ENCODE measurements at regions of chr3 and their contacts with region 1.

Region 1: GRCh38 chr3:44729384-44729910 is at the start of gene ZNF501:
- DNase-seq: peak; percentile 67
- H3K4me3 ChIP-seq: peak within 1 kb of the TSS; percentile 74
- H3K27ac ChIP-seq: peak within 1 kb of the TSS; percentile 53
- H3K27me3 ChIP-seq: no peaks in the 10 kb centered on the region
- CTCF ChIP-seq: no peak
- polyA plus RNA-seq, gene ZNF501: 3.9 and 4.3 TPM in 2 replicates

Region 2: GRCh38 chr3:44712455-44713075 is 16.9 kb before region 1 on chr3 and contains the start of gene ZNF502:
- CTCF ChIA-PET with region 1: no interaction called
- POLR2A ChIA-PET with region 1: interaction called, 18 read pairs
- DNase-seq: peak; percentile 62
- H3K4me3 ChIP-seq: peak within 1 kb of the TSS; percentile 91
- H3K27ac ChIP-seq: peak within 1 kb of the TSS; percentile 59
- H3K27me3 ChIP-seq: no peaks in the 10 kb centered on the region
- CTCF ChIP-seq: peak; percentile 39
- polyA plus RNA-seq, gene ZNF502: 3.0 and 4.0 TPM in 2 replicates